ENCODE measurements at regions of chr12 and their contacts with region 1.

Region 1: DNA sequence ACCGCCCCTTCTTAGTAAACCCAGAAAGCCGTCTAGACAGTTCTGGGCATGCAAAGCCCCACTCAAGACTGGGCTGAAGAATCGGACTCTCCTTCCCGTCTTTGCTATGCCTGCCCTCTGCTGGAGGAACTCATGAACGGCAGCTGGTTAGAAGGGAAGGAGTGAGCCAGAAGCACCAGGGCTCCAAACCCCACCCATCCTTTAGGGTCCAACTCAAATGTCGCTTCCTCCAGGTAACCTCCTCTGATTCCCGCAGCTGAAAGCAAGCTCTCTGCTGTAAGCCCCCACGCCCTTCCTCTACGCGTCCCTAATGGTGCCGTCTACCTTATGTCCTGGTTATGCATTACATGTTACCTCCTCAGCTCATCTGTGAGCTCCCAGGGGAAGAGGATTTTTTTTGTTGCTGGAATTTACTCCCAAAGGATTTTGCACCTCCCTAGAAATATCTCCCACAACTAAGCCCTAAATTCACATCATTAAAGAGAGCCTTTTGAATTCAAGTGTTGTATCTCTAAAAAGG is 59.0 kb upstream of the SCN8A start:
- DNase-seq: peak; percentile 75 to 80 (median 80)
- ATAC-seq: peak; percentile 97
- H3K4me3 ChIP-seq: no peak overlapping the region
- H3K27ac ChIP-seq: no peak overlapping the region
- H3K4me1 ChIP-seq: no peaks in the 10 kb centered on the region
- H3K27me3 ChIP-seq: peaks cover 5 to 36% of the 10 kb centered on the region in 2 experiments; a peak in 3 of 5 replicates
- CTCF ChIP-seq: peak; percentile 85 to 88 (median 85)
- EP300 ChIP-seq: no peak
- POLR2A ChIP-seq: no peak
- RAD21 ChIP-seq: peak; percentile 69 to 84

Region 2: GRCh38 chr12:51879102-51879501 is 347.1 kb after region 1 on chr12:
- CTCF ChIA-PET with region 1: no interaction called
- POLR2A ChIA-PET with region 1: interaction called, 3 read pairs
- in situ Hi-C with region 1: no loop called
- intact Hi-C with region 1: loop called (anchors 5 kb)
- DNase-seq: peak in 1 of 4 experiments; percentile 4
- ATAC-seq: no peak
- H3K4me3 ChIP-seq: no peak overlapping the region
- H3K27ac ChIP-seq: no peak overlapping the region
- H3K4me1 ChIP-seq: peaks cover 0 to 8% of the 10 kb centered on the region in 2 experiments; a peak in 3 of 5 replicates
- H3K27me3 ChIP-seq: no peaks in the 10 kb centered on the region
- CTCF ChIP-seq: no peak
- EP300 ChIP-seq: no peak
- POLR2A ChIP-seq: no peak
- RAD21 ChIP-seq: no peak